ENCODE measurements at regions of chr6 and their contacts with region 1.

Region 1: DNA sequence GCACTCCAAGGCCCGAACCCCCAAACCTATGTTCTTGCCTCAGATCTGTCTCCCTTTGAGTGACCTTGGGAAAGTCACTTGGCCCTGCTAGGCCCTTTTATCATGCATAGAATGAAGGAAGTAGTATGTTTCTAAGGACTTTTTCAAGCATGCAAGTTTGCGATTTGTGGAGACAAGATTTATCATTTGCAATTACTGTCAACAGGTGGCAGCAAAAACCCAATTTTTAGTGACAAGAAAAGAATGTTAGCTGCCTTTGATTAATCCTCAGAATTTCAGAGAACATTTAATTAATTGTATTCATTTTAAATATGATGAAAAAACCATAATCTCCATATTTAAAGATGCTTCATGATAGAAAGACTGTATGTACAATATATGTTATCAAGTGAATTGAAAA is 28.3 kb upstream of the PREP start:
- DNase-seq: peak; percentile 75
- ATAC-seq: no peak
- H3K4me3 ChIP-seq: no peak overlapping the region
- H3K27ac ChIP-seq: no peak overlapping the region
- H3K4me1 ChIP-seq: peaks cover 51% of the 10 kb centered on the region
- H3K27me3 ChIP-seq: no peaks in the 10 kb centered on the region
- CTCF ChIP-seq: peak; percentile 65

Region 2: DNA sequence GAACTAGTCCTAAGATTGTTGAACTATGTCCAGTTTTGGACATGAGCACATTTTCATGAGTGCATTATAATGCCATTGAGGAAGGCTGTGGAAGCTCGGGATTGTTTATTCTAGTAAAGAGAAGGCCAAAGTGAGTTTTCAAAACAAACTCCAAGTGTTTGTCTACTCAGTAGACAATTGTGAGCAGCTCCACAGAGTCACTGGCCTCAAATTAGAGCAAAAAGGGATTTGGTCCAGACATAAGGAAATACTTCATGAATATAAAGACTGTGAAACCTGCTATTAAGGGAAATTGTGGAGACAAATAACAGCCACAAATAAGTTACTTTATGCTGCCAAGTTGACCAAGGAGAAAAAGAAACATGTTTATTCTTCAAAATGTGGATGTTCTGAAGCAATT is 14.3 kb after region 1 on chr6:
- CTCF ChIA-PET with region 1: no interaction called
- POLR2A ChIA-PET with region 1: no interaction called
- intact Hi-C with region 1: no loop called
- DNase-seq: no peak
- ATAC-seq: no peak
- H3K4me3 ChIP-seq: no peak overlapping the region
- H3K27ac ChIP-seq: no peak overlapping the region
- H3K4me1 ChIP-seq: no peaks in the 10 kb centered on the region
- H3K27me3 ChIP-seq: no peaks in the 10 kb centered on the region
- CTCF ChIP-seq: no peak

Region 3: GRCh38 chr6:105484238-105485161 is 53.3 kb after region 1 on chr6:
- CTCF ChIA-PET with region 1: interaction called, 6 read pairs
- POLR2A ChIA-PET with region 1: no interaction called
- intact Hi-C with region 1: loop called (anchors 2 kb)
- DNase-seq: peak; percentile 79
- ATAC-seq: peak; percentile 68
- H3K4me3 ChIP-seq: no peak overlapping the region
- H3K27ac ChIP-seq: 0 out of 2 replicates have a peak overlapping the region, but pooled peaks have one; percentile 4
- H3K4me1 ChIP-seq: peaks cover 24% of the 10 kb centered on the region
- H3K27me3 ChIP-seq: no peaks in the 10 kb centered on the region
- CTCF ChIP-seq: peak; percentile 88

Region 4: GRCh38 chr6:105644073-105644489 is 212.9 kb after region 1 on chr6:
- CTCF ChIA-PET with region 1: no interaction called
- POLR2A ChIA-PET with region 1: no interaction called
- intact Hi-C with region 1: no loop called
- DNase-seq: no peak
- ATAC-seq: no peak
- H3K4me3 ChIP-seq: no peak overlapping the region
- H3K27ac ChIP-seq: no peak overlapping the region
- H3K4me1 ChIP-seq: peaks cover 6% of the 10 kb centered on the region
- H3K27me3 ChIP-seq: no peaks in the 10 kb centered on the region
- CTCF ChIP-seq: no peak

Region 5: DNA sequence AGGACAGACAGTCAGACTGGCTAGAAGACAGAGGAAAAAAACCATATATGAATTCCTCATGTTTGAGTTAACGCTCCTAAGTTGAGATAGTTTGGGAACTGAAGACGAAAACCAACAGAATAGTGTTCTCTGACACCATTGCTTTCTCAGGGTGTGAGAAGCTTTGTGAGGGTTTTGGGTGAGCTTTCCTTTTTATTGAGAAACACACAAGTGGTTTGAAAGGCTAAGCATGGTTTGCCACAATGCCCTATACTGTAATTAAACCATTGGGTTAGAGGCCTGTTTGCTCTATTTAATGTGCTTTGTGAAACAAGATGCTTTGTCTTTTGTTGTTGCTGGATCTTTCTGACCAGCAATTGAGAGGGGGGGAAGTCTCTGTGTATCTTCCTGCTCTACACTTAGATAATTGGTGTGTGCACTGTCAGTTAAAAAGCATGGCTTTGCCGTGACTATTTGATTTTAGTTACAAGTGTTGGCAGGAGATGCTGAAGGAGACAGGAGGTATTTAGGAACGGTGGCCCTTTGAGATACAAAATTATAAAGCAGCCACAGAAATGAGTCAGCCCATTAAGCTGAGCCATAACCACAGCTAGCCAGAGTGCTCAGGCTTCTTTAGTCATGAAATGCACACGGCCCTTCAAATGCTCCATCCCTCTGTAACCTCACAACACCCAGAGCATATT is 244.6 kb after region 1 on chr6:
- CTCF ChIA-PET with region 1: no interaction called
- POLR2A ChIA-PET with region 1: no interaction called
- intact Hi-C with region 1: loop called (anchors 5 kb)
- DNase-seq: peak; percentile 89
- ATAC-seq: peak; percentile 95
- H3K4me3 ChIP-seq: no peak overlapping the region
- H3K27ac ChIP-seq: peak overlapping the region; percentile 66
- H3K4me1 ChIP-seq: peaks cover 35% of the 10 kb centered on the region
- H3K27me3 ChIP-seq: no peaks in the 10 kb centered on the region
- CTCF ChIP-seq: no peak

Region 6: GRCh38 chr6:105835373-105835772 is 404.1 kb after region 1 on chr6:
- CTCF ChIA-PET with region 1: no interaction called
- POLR2A ChIA-PET with region 1: no interaction called
- intact Hi-C with region 1: loop called (anchors 5 kb)
- DNase-seq: peak; percentile 42
- ATAC-seq: no peak
- H3K4me3 ChIP-seq: no peak overlapping the region
- H3K27ac ChIP-seq: no peak overlapping the region
- H3K4me1 ChIP-seq: peaks cover 9% of the 10 kb centered on the region
- H3K27me3 ChIP-seq: no peaks in the 10 kb centered on the region
- CTCF ChIP-seq: peak; percentile 54

Region 7: DNA sequence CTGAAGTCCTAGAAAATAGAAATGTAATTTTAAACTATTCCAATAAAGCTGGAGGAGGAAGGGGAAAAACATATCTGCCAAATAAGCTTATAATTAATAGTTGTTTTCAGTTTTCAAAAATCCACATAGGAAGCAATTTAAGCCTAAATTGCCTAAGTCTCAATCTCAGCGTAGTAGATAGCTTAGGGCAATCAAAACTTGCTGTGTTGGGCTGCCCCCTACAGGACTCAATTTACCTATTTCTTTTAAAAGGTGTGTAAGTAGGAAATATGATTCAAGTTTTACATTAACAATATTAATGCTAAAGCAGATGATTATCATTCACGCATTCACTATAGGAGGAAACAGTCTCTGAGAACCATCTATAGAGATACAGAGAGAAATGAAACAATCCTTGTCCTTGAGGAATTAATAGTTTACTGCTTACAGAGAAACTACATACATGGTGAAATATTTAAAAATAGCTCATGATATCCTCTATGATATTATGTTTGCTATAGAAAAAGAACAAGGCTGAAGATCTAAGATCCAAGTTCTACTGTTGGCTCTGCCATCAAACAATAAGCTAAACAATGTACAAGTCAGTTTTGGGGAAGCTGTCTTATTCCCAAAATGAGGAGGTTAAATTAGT is 792.2 kb after region 1 on chr6:
- CTCF ChIA-PET with region 1: no interaction called
- POLR2A ChIA-PET with region 1: no interaction called
- intact Hi-C with region 1: loop called (anchors 5 kb)
- DNase-seq: peak; percentile 81
- ATAC-seq: peak; percentile 57; the same call in 1 of the 2 replicates
- H3K4me3 ChIP-seq: no peak overlapping the region
- H3K27ac ChIP-seq: no peak overlapping the region
- H3K4me1 ChIP-seq: peaks cover 21% of the 10 kb centered on the region
- H3K27me3 ChIP-seq: no peaks in the 10 kb centered on the region
- CTCF ChIP-seq: peak; percentile 78

Measured in PC-3 (cell line).